ENCODE measurements at regions of chr6 and their contacts with region 1.

Region 1: GRCh38 chr6:125790358-125791150 is at the start of gene NCOA7:
- DNase-seq: peak; percentile 80 to 84 (median 83)
- H3K4me3 ChIP-seq: peak within 1 kb of the TSS; percentile 78 to 79
- H3K4me3 Mint-ChIP-seq: peak within 1 kb of the TSS; percentile 93 to 96 (median 94)
- H3K27ac ChIP-seq: peak within 1 kb of the TSS; percentile 82
- H3K27ac Mint-ChIP-seq: peak within 1 kb of the TSS; percentile 97 to 99 (median 98)
- H3K4me1 ChIP-seq: peaks cover 58% of the 10 kb centered on the region
- H3K4me1 Mint-ChIP-seq: peaks cover 39 to 63% (median 51%) of the 10 kb centered on the region in 4 donors
- H3K27me3 ChIP-seq: no peaks in the 10 kb centered on the region
- H3K27me3 Mint-ChIP-seq: no peaks in the 10 kb centered on the region
- total RNA-seq, gene NCOA7: 73.6 to 75.1 TPM

Region 2: DNA sequence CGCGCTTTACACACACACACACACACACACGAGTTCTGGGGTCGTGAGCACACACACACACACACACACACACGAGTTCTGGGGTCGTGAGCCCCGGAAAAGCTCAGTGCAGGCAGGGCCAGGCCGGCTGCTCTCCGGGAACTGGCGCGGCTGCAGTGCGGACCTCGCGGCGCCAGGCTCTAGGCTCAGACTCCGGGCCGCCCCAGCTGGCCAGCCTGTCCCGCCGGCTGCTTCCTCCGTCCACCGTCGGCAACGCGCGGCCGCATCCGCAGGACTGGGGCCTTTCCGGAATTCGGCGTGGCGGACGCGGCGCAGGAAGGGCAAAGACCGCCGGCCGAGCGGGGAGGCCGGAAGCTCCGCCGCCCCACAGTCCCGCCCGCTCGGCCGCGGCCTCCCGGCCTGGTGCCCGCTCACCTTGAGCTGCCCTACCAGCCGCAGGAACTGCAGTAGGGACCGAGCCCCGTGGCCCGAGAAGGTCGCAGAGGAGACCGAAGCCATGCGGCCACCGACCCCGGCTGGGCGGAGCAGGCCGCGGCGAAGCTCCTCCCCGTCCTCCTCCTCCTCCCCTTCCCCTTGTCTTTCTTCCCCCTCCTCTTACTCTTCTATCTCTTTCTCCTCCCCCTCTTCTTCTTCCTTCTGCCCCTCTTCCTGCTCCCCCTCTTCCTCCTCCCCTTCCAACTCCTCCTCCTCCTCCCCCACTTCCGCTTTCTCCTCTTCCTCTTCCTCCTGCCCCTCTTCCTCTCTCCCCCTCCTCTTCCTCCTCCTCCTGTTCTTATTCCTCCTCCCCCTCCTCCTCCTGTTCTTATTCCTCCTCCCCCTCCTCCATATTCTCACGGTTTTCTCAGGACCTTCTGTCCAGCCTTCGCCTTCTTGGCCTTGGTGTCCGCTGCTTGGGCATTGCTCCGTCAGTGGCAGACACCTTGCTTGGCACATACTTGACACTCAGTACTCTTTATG is 488.8 kb before region 1 on chr6 and contains the start of gene HDDC2:
- CTCF ChIA-PET with region 1: no interaction called
- POLR2A ChIA-PET with region 1: interaction called, 40 read pairs
- intact Hi-C with region 1: no loop called
- DNase-seq: peak in 4 of 5 donors; percentile 32 to 43 (median 37)
- H3K4me3 ChIP-seq: peak within 1 kb of the TSS; percentile 44 to 62
- H3K4me3 Mint-ChIP-seq: peak within 1 kb of the TSS; percentile 82 to 97 (median 92)
- H3K27ac ChIP-seq: peak within 1 kb of the TSS; percentile 62
- H3K27ac Mint-ChIP-seq: peak within 1 kb of the TSS; percentile 78 to 97 (median 94)
- H3K4me1 ChIP-seq: peaks cover 47% of the 10 kb centered on the region
- H3K4me1 Mint-ChIP-seq: peaks cover 44 to 59% (median 54%) of the 10 kb centered on the region in 4 donors
- H3K27me3 ChIP-seq: no peaks in the 10 kb centered on the region
- H3K27me3 Mint-ChIP-seq: no peaks in the 10 kb centered on the region
- total RNA-seq, gene HDDC2: 49.5 to 53.5 TPM

Region 3: GRCh38 chr6:125732398-125732797 is 58.2 kb before region 1 on chr6:
- CTCF ChIA-PET with region 1: no interaction called
- POLR2A ChIA-PET with region 1: no interaction called
- intact Hi-C with region 1: no loop called
- DNase-seq: no peak
- H3K4me3 ChIP-seq: no peak overlapping the region
- H3K4me3 Mint-ChIP-seq: no peak overlapping the region
- H3K27ac ChIP-seq: no peak overlapping the region
- H3K27ac Mint-ChIP-seq: no peak overlapping the region
- H3K4me1 ChIP-seq: no peaks in the 10 kb centered on the region
- H3K4me1 Mint-ChIP-seq: no peaks in the 10 kb centered on the region
- H3K27me3 ChIP-seq: no peaks in the 10 kb centered on the region
- H3K27me3 Mint-ChIP-seq: peaks cover 21 to 30% of the 10 kb centered on the region in 2 donors

Region 4: DNA sequence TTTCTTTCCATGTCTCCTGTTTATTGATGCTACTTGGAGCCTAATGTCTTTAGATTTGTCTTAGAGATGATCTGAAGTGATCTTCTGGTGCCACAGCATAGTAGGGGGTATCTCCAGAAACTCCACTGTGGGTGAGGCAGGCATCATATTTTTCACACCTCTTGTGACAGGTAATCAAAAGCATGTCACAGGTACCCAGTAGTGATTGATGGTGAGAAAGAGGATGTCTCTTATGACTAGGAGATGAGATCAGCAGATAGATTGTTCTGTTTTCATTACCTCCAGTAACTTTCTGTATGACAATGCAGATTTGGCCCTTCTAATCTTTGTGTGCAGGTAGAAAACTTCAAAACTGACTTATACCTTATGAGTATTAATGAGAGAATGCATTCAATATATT is 13.7 kb after region 1 on chr6:
- CTCF ChIA-PET with region 1: interaction called, 20 read pairs
- POLR2A ChIA-PET with region 1: interaction called, 25 read pairs
- intact Hi-C with region 1: loop called (anchors 1 kb)
- DNase-seq: peak; percentile 27 to 66 (median 42)
- H3K4me3 ChIP-seq: no peak overlapping the region
- H3K4me3 Mint-ChIP-seq: peak overlapping the region in 4 of 8 donors; percentile 11 to 50 (median 48)
- H3K27ac ChIP-seq: no peak overlapping the region
- H3K27ac Mint-ChIP-seq: peak overlapping the region; percentile 0 to 78 (median 42)
- H3K4me1 ChIP-seq: peaks cover 65% of the 10 kb centered on the region
- H3K4me1 Mint-ChIP-seq: peaks cover 63 to 80% (median 69%) of the 10 kb centered on the region in 4 donors
- H3K27me3 ChIP-seq: no peaks in the 10 kb centered on the region
- H3K27me3 Mint-ChIP-seq: no peaks in the 10 kb centered on the region

Region 5: GRCh38 chr6:125834348-125834747 is 43.8 kb after region 1 on chr6:
- CTCF ChIA-PET with region 1: interaction called, 152 read pairs
- POLR2A ChIA-PET with region 1: interaction called, 217 read pairs
- intact Hi-C with region 1: loop called (anchors 1 kb)
- DNase-seq: peak in 4 of 5 donors; percentile 24 to 50 (median 38)
- H3K4me3 ChIP-seq: no peak overlapping the region
- H3K4me3 Mint-ChIP-seq: peak overlapping the region; percentile 16 to 78 (median 40)
- H3K27ac ChIP-seq: no peak overlapping the region
- H3K27ac Mint-ChIP-seq: peak overlapping the region; percentile 49 to 95 (median 81)
- H3K4me1 ChIP-seq: peaks cover 62% of the 10 kb centered on the region
- H3K4me1 Mint-ChIP-seq: peaks cover 54 to 78% (median 64%) of the 10 kb centered on the region in 4 donors
- H3K27me3 ChIP-seq: no peaks in the 10 kb centered on the region
- H3K27me3 Mint-ChIP-seq: no peaks in the 10 kb centered on the region

Region 6: GRCh38 chr6:125888989-125889656 is 98.6 kb after region 1 on chr6:
- CTCF ChIA-PET with region 1: interaction called, 27 read pairs
- POLR2A ChIA-PET with region 1: interaction called, 15 read pairs
- intact Hi-C with region 1: loop called (anchors 1 kb)
- DNase-seq: peak in 4 of 5 donors; percentile 23 to 49 (median 34)
- H3K4me3 ChIP-seq: no peak overlapping the region
- H3K4me3 Mint-ChIP-seq: no peak overlapping the region
- H3K27ac ChIP-seq: no peak overlapping the region
- H3K27ac Mint-ChIP-seq: peak overlapping the region in 5 of 7 donors; percentile 29 to 71 (median 54)
- H3K4me1 ChIP-seq: no peaks in the 10 kb centered on the region
- H3K4me1 Mint-ChIP-seq: peaks cover 0 to 5% (median 3%) of the 10 kb centered on the region in 4 donors
- H3K27me3 ChIP-seq: no peaks in the 10 kb centered on the region
- H3K27me3 Mint-ChIP-seq: no peaks in the 10 kb centered on the region

Region 7: GRCh38 chr6:125918681-125919566 is 128.4 kb after region 1 on chr6:
- CTCF ChIA-PET with region 1: interaction called, 34 read pairs
- POLR2A ChIA-PET with region 1: interaction called, 56 read pairs
- intact Hi-C with region 1: no loop called
- DNase-seq: peak; percentile 63 to 80 (median 70)
- H3K4me3 ChIP-seq: peak overlapping the region in 1 of 2 donors; percentile 37
- H3K4me3 Mint-ChIP-seq: peak overlapping the region; percentile 51 to 87 (median 79)
- H3K27ac ChIP-seq: peak overlapping the region; percentile 73
- H3K27ac Mint-ChIP-seq: peak overlapping the region; percentile 83 to 97 (median 95)
- H3K4me1 ChIP-seq: peaks cover 23% of the 10 kb centered on the region
- H3K4me1 Mint-ChIP-seq: peaks cover 23 to 28% (median 27%) of the 10 kb centered on the region in 4 donors
- H3K27me3 ChIP-seq: no peaks in the 10 kb centered on the region
- H3K27me3 Mint-ChIP-seq: no peaks in the 10 kb centered on the region

Region 8: DNA sequence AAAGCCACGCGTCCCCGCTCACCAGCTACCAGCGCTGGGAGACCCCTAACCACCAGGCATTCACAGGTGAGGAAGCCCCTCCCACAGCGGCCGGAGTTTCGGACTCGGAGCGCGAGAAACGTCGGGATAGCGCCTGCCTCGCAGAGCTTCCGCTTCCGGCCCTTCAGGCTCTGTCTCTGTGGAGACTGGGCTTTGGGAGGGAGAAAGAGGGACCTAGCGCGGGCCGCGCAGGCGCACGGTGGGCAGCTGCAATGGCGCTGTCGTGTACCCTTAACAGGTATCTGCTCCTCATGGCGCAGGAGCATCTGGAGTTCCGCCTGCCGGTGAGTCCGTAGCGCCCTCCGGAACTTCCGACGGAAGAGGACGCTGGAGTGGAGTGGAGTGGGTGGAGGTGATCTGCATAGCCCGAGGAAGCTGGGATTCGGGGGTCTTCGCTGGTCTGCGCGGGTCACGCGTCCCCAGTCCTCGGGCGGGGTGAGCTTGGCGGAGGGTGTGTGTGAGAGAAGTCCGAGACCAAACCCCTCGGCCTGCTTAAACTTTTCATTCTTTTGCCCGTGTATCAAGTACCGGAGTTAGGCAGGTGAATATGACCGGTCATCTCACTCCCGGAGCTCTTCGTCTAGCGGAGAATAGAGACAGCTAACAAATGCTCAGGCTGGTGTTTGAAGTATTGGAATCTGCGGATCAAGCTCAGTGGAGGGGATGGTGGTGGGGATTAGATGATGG is 195.9 kb after region 1 on chr6 and contains the start of gene TRMT11:
- CTCF ChIA-PET with region 1: interaction called, 6 read pairs
- POLR2A ChIA-PET with region 1: interaction called, 62 read pairs
- intact Hi-C with region 1: no loop called
- DNase-seq: peak; percentile 80 to 86 (median 81)
- H3K4me3 ChIP-seq: peak within 1 kb of the TSS; percentile 93 to 95
- H3K4me3 Mint-ChIP-seq: peak within 1 kb of the TSS; percentile 6 to 57 (median 24)
- H3K27ac ChIP-seq: peak within 1 kb of the TSS; percentile 77
- H3K27ac Mint-ChIP-seq: no peak within 1 kb of the TSS
- H3K4me1 ChIP-seq: peaks cover 31% of the 10 kb centered on the region
- H3K4me1 Mint-ChIP-seq: peaks cover 2 to 15% (median 8%) of the 10 kb centered on the region in 4 donors
- H3K27me3 ChIP-seq: no peaks in the 10 kb centered on the region
- H3K27me3 Mint-ChIP-seq: no peaks in the 10 kb centered on the region
- total RNA-seq, gene TRMT11: 25.5 to 30.8 TPM

Measured in CD4-positive, alpha-beta memory T cell (primary cell).